ENCODE measurements at regions of chr22 and their contacts with region 1.

Region 1: DNA sequence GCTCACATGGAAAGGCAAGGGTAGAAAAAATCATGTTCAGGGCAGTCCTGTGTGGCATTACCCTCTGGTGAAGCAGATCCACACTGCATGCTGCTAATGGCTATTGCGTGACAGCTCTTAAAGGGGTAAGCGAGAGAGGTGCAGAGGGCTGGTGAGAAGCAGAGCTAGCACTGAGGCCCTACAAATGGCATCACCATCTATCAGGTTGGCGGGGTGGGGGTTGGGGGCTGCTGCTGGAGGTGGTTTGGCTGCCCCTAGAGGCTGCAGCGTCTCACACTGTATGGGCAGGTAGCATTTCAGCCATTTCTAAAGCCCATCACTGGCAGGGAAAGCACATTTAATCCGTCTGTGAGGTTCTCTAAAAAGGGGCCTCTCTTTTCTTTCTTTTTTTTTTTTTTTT is 16.9 kb upstream of the TMA7B start:
- DNase-seq: no peak
- H3K4me3 Mint-ChIP-seq: peak overlapping the region; percentile 42
- H3K27ac Mint-ChIP-seq: peak overlapping the region; percentile 82
- H3K4me1 Mint-ChIP-seq: peaks cover 76% of the 10 kb centered on the region
- H3K27me3 Mint-ChIP-seq: no peaks in the 10 kb centered on the region

Region 2: GRCh38 chr22:39622881-39623367 is 320.4 kb before region 1 on chr22:
- intact Hi-C with region 1: loop called (anchors 2 kb)
- DNase-seq: peak; percentile 42
- H3K4me3 Mint-ChIP-seq: no peak overlapping the region
- H3K27ac Mint-ChIP-seq: no peak overlapping the region
- H3K4me1 Mint-ChIP-seq: peaks cover 3% of the 10 kb centered on the region
- H3K27me3 Mint-ChIP-seq: peaks cover 6% of the 10 kb centered on the region

Region 3: DNA sequence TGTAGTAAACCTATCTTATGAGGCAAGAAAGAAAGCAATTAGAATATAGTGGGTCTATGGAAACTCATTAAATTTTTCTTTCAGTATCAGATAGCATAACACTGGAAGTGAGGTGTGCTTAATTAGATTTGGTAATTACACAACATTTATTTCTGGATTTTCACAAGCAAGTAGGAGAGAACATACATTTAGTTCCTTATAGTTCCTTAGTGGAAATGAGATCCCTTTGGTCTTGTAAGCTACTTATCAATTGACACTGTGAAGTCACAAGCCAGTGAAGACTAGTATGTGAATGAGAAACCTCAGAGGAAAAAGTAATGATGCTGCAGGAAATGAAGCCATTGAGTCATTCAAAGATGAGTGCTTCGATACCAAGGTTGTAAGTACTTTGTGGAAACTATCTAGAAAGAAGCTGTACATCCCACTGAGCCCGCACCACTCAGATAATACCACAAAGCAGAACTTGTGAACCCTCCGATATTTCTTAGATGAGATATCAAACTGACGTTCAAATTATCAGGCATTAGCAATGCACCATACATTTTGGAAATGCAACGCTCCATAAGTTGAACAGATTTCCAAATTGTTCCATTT is 103.3 kb before region 1 on chr22:
- intact Hi-C with region 1: loop called (anchors 5 kb)
- DNase-seq: peak; percentile 13
- H3K4me3 Mint-ChIP-seq: no peak overlapping the region
- H3K27ac Mint-ChIP-seq: peak overlapping the region; percentile 51
- H3K4me1 Mint-ChIP-seq: peaks cover 16% of the 10 kb centered on the region
- H3K27me3 Mint-ChIP-seq: peaks cover 22% of the 10 kb centered on the region

Region 4: GRCh38 chr22:39932918-39933649 is 10.3 kb before region 1 on chr22:
- intact Hi-C with region 1: loop called (anchors 1 kb)
- DNase-seq: no peak
- H3K4me3 Mint-ChIP-seq: peak overlapping the region; percentile 80
- H3K27ac Mint-ChIP-seq: peak overlapping the region; percentile 91
- H3K4me1 Mint-ChIP-seq: peaks cover 55% of the 10 kb centered on the region
- H3K27me3 Mint-ChIP-seq: no peaks in the 10 kb centered on the region

Region 5: DNA sequence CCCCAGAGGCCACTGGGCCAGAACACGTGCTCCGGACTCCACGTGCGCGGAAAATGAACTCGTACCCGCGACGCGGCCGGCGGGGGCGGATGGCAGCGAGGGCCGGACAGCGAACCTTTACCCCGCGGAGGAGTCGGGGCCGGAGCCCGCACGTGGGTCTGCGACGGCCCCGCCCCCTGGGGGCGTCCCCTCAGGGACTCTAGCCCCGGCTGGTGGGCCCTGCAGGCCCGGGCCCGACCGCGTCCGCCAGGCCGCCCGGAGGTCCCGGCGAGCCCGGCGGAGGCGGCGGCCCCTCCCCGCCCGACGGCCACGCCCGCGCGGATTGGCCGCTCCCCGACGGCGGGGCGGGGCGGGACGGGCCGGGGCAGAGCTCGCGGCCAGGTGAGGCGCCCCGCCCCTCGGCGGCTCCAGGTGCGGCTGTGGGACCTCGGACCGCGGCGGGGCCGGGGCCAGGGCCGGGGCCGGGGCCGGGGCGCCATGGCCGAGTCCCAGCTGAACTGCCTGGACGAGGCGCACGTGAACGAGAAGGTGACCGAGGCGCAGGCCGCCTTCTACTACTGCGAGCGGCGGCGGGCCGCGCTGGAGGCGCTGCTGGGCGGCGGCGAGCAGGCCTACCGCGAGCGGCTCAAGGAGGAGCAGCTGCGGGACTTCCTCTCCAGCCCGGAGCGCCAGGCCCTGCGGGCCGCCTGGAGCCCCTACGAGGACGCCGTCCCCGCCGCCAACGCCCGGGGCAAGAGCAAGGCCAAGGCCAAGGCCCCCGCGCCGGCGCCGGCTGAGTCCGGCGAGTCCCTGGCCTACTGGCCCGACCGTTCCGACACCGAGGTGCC is 51.4 kb after region 1 on chr22 and contains the start of gene FAM83F:
- intact Hi-C with region 1: loop called (anchors 5 kb)
- DNase-seq: peak; percentile 21
- H3K4me3 Mint-ChIP-seq: peak within 1 kb of the TSS; percentile 57
- H3K27ac Mint-ChIP-seq: peak within 1 kb of the TSS; percentile 26
- H3K4me1 Mint-ChIP-seq: peaks cover 7% of the 10 kb centered on the region
- H3K27me3 Mint-ChIP-seq: peaks cover 46% of the 10 kb centered on the region
- total RNA-seq, gene FAM83F: 0.05 and 0.39 TPM in 2 replicates

Measured in activated T-helper 1 cell treated with anti-CD3 and anti-CD28 coated beads, Interleukin-12 subunit alpha, Interleukin-12 subunit beta, Interleukin-2, Interleukin-4 antibody, amounts not matched to agents 30 ng/mL and 10 ng/mL and 1 ng/mL, durations not matched to agents 14 hours and 24 hours and 36 hours (primary cell).